Activated CD8-positive, alpha-beta T cell treated with anti-CD3 and anti-CD28 coated beads for 36 hours (primary cell): ENCODE measurements at regions of chr11 and their contacts with region 1.

Region 1: DNA sequence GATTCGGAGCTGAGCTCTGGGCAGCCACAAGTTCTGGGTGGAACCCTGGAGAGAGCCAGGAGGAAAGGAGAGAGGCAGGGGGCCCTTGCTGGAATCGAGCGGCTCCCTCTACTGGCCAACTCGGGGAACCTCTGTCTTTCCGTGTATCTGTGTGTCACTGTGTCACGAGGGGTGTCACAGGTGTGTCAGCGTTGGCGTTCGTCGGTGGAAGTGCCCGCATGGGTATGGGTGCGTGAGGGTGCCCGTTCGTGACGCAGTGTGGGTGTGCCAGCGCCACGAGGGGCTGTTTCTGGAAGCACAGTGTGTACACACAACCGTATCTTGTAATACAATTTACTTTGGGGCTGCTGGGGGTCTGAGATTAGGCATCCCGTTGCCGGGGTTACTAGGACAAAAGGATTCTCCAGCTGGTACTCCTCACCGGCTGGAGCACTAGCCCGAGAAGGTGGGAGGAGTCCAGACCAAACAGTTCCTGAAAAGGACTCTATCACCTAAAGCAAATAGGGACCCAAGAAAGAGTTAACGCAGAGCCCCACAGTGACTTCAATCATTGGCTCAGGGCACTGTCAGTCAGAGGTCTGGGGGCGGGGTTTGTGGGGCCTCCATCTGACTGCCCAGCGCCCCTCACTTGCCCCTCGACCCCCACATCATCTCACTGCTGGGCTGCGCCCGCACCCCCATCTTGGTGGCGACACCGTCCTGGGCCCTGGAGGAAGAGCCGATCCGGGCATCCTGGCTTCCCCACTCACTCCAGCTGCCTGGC is 2.6 kb upstream of the BCL9L start:
- DNase-seq: peak; percentile 94
- ATAC-seq: peak; percentile 54
- H3K4me3 Mint-ChIP-seq: peak overlapping the region; percentile 90
- H3K27ac Mint-ChIP-seq: peak overlapping the region; percentile 98
- H3K4me1 Mint-ChIP-seq: peaks cover 46% of the 10 kb centered on the region
- H3K27me3 Mint-ChIP-seq: no peaks in the 10 kb centered on the region
- CTCF ChIP-seq: peak; percentile 94

Region 2: GRCh38 chr11:118785362-118785761 is 142.9 kb before region 1 on chr11:
- CTCF ChIA-PET with region 1: interaction called, 14 read pairs
- POLR2A ChIA-PET with region 1: interaction called, 33 read pairs
- intact Hi-C with region 1: loop called (anchors 5 kb)
- DNase-seq: peak; percentile 41
- ATAC-seq: no peak
- H3K4me3 Mint-ChIP-seq: peak overlapping the region; percentile 99
- H3K27ac Mint-ChIP-seq: peak overlapping the region; percentile 100
- H3K4me1 Mint-ChIP-seq: peaks cover 39% of the 10 kb centered on the region
- H3K27me3 Mint-ChIP-seq: no peaks in the 10 kb centered on the region
- CTCF ChIP-seq: no peak

Region 3: DNA sequence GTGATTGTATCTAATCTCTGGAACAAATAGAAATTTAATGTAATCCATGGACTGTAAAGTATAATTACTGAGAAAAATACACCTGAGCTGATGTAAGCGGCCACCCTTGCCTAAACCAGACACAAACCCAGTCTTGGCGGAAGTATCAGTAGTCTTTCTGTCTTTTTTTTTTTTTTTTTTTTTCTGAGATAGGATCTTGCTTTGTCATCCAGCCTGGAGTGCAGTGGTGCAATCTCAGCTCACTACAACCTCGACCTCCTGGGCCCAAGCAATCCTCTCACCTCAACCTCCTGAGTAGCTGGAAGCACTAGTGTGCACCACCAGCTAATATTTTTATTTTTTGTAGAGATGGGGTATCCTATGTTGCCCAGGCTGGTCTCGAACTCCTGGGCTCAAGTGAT is 50.1 kb before region 1 on chr11:
- CTCF ChIA-PET with region 1: interaction called, 15 read pairs
- POLR2A ChIA-PET with region 1: no interaction called
- intact Hi-C with region 1: no loop called
- DNase-seq: peak; percentile 47
- ATAC-seq: peak; percentile 12
- H3K4me3 Mint-ChIP-seq: no peak overlapping the region
- H3K27ac Mint-ChIP-seq: peak overlapping the region; percentile 98
- H3K4me1 Mint-ChIP-seq: peaks cover 87% of the 10 kb centered on the region
- H3K27me3 Mint-ChIP-seq: no peaks in the 10 kb centered on the region
- CTCF ChIP-seq: no peak

Region 4: DNA sequence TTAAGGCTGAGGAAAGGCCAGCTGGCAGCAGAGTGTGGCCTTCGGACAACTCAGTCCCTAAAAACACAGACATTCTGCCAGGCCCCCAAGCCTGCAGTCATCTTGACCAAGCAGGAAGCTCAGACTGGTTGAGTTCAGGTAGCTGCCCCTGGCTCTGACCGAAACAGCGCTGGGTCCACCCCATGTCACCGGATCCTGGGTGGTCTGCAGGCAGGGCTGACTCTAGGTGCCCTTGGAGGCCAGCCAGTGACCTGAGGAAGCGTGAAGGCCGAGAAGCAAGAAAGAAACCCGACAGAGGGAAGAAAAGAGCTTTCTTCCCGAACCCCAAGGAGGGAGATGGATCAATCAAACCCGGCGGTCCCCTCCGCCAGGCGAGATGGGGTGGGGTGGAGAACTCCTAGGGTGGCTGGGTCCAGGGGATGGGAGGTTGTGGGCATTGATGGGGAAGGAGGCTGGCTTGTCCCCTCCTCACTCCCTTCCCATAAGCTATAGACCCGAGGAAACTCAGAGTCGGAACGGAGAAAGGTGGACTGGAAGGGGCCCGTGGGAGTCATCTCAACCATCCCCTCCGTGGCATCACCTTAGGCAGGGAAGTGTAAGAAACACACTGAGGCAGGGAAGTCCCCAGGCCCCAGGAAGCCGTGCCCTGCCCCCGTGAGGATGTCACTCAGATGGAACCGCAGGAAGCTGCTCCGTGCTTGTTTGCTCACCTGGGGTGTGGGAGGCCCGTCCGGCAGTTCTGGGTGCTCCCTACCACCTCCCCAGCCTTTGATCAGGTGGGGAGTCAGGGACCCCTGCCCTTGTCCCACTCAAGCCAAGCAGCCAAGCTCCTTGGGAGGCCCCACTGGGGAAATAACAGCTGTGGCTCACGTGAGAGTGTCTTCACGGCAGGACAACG is 32.9 kb before region 1 on chr11:
- CTCF ChIA-PET with region 1: interaction called, 15 read pairs
- POLR2A ChIA-PET with region 1: interaction called, 4 read pairs
- intact Hi-C with region 1: no loop called
- DNase-seq: peak; percentile 88
- ATAC-seq: peak; percentile 86
- H3K4me3 Mint-ChIP-seq: peak overlapping the region; percentile 67
- H3K27ac Mint-ChIP-seq: peak overlapping the region; percentile 95
- H3K4me1 Mint-ChIP-seq: peaks cover 74% of the 10 kb centered on the region
- H3K27me3 Mint-ChIP-seq: no peaks in the 10 kb centered on the region
- CTCF ChIP-seq: no peak

Region 5: DNA sequence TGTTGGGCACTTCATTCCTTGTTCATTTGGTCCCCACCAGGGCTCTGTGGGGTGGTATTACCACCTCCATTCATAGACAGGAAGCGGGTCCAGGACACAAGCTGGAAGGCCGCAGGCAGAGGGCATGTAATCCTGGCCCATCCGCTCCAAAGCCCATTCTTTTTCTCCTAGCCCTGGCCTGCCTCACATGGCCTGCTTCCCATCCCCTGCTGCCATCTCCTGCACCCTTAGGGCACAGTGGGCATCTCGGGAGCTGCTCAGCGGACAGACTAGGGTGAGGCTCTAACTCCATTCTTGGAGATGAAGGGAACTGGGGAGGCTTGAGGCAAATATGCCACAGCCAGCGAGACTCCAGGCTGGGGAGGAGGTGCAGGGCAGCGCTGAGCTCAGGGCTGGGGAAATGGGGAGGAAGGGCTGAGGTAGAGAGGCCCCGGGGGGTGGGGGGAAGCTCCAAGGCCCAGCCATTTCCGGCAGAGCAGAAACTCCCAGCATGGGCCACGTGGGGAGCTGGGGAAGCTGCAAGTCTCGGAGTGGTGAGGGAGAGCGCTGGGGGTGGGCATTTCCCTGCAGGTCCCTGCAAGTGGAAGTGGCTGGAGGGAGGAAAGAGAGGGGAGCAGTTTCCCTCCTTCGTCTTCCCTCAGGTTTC is 11.8 kb after region 1 on chr11:
- CTCF ChIA-PET with region 1: interaction called, 37 read pairs
- POLR2A ChIA-PET with region 1: interaction called, 32 read pairs
- intact Hi-C with region 1: no loop called
- DNase-seq: peak; percentile 82
- ATAC-seq: peak; percentile 94
- H3K4me3 Mint-ChIP-seq: peak overlapping the region; percentile 59
- H3K27ac Mint-ChIP-seq: peak overlapping the region; percentile 83
- H3K4me1 Mint-ChIP-seq: peaks cover 39% of the 10 kb centered on the region
- H3K27me3 Mint-ChIP-seq: no peaks in the 10 kb centered on the region
- CTCF ChIP-seq: no peak

Region 6: GRCh38 chr11:118956094-118956846 is 28.0 kb after region 1 on chr11 and contains the start of gene UPK2:
- CTCF ChIA-PET with region 1: interaction called, 12 read pairs
- POLR2A ChIA-PET with region 1: no interaction called
- intact Hi-C with region 1: no loop called
- DNase-seq: peak; percentile 93
- ATAC-seq: peak; percentile 99
- H3K4me3 Mint-ChIP-seq: no peak within 1 kb of the TSS
- H3K27ac Mint-ChIP-seq: no peak within 1 kb of the TSS
- H3K4me1 Mint-ChIP-seq: peaks cover 3% of the 10 kb centered on the region
- H3K27me3 Mint-ChIP-seq: no peaks in the 10 kb centered on the region
- CTCF ChIP-seq: peak; percentile 80
- total RNA-seq, gene UPK2: 1.5 to 2.2 TPM

Region 7: DNA sequence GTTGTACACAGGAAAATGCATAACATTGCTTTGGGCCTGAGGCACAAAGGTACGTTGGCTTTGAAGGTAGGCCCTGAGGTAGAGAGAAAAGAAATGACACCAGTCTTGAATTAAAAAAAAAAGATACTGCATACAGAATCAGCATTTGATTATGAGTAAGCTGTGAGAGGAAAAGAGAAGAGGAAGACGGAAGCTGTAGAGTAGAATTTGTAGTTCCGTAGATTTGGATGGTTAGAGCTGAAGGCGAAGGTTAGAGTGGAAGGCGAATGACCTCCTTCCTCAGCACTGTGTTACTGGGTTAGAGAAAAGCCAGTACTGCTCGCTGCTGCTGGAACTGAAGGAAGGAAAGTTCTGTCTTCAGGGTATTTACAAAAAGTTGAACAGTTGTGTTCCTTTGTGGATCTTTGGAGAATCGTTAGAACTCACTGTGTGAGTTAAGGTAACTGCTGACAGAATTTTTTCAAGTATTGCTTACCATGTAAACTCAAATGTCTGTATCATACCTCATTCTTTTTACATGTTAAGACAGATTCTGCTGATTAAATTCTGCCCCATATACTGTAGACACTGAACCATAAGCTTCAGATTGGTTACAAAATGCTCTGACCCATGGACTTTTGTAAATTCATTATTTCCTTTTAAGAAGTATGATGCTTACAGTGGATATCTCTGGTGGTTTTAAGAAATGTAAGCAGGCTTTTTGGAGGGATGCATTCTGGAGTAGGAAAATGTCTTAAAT is 338.4 kb after region 1 on chr11:
- CTCF ChIA-PET with region 1: no interaction called
- POLR2A ChIA-PET with region 1: no interaction called
- intact Hi-C with region 1: no loop called
- DNase-seq: no peak
- ATAC-seq: peak; percentile 34
- H3K4me3 Mint-ChIP-seq: peak overlapping the region; percentile 56
- H3K27ac Mint-ChIP-seq: peak overlapping the region; percentile 91
- H3K4me1 Mint-ChIP-seq: peaks cover 38% of the 10 kb centered on the region
- H3K27me3 Mint-ChIP-seq: no peaks in the 10 kb centered on the region
- CTCF ChIP-seq: no peak